ENCODE measurements at regions of chr4 and their contacts with region 1.

Region 1: DNA sequence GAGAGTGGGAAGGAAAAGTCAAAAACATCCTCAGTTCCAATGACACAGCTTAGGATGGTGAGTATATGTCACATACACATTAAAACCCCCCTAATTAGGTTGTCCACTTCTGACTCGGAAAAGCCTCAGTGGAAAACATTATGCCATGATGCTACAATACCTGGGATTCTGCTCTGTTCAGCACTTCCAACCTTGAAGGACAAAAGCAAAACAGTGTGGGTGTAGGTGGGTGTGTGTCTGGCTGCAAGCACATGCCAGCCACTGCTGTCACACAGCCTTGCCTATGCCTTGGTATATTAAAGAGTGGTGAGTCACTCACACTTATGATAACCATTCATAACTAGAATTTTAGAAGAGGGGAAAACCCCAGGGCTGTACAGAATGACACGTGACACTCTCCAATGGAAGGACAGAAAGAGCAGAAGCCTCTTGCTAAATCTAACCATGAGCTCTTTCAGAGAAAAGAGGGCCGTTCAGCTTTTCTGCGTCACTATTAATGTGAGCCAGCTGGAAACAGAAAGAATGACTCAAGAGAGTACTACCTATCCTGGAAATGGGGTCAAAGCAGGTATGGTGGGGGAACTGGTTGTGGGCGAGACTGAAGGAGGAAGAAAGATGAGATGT is 159.6 kb downstream of the TET2 start:
- DNase-seq: peak; percentile 84
- H3K4me3 Mint-ChIP-seq: no peak overlapping the region
- H3K27ac Mint-ChIP-seq: peak overlapping the region; percentile 87
- H3K4me1 Mint-ChIP-seq: peaks cover 24% of the 10 kb centered on the region
- H3K27me3 Mint-ChIP-seq: no peaks in the 10 kb centered on the region

Region 2: GRCh38 chr4:104930298-104930697 is 376.0 kb before region 1 on chr4:
- CTCF ChIA-PET with region 1: no interaction called
- intact Hi-C with region 1: loop called (anchors 5 kb)
- DNase-seq: no peak
- H3K4me3 Mint-ChIP-seq: no peak overlapping the region
- H3K27ac Mint-ChIP-seq: no peak overlapping the region
- H3K4me1 Mint-ChIP-seq: peaks cover 25% of the 10 kb centered on the region
- H3K27me3 Mint-ChIP-seq: no peaks in the 10 kb centered on the region

Region 3: GRCh38 chr4:105140684-105141490 is 165.4 kb before region 1 on chr4:
- CTCF ChIA-PET with region 1: interaction called, 4 read pairs
- intact Hi-C with region 1: loop called (anchors 1 kb)
- DNase-seq: peak; percentile 59
- H3K4me3 Mint-ChIP-seq: no peak overlapping the region
- H3K27ac Mint-ChIP-seq: no peak overlapping the region
- H3K4me1 Mint-ChIP-seq: peaks cover 28% of the 10 kb centered on the region
- H3K27me3 Mint-ChIP-seq: no peaks in the 10 kb centered on the region

Region 4: DNA sequence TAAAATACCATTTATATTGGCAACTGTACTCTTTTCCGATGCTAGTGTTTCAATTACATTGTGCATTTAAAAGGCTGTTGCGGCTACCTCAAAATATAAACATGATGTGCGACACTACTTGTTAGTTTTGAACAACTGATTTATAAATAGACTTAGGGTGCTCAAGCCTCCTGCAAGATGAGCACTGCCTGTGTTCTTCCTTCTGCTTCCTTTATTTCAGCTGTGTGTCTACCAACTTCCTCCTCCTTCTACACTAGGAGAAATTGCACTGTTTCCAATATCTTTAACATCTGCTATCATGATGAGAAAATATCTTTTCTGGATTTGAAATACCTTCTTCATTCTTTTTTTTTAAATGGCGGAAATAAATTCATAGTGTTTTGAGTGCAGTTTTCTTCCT is 135.6 kb before region 1 on chr4:
- CTCF ChIA-PET with region 1: no interaction called
- intact Hi-C with region 1: no loop called
- DNase-seq: no peak
- H3K4me3 Mint-ChIP-seq: no peak overlapping the region
- H3K27ac Mint-ChIP-seq: no peak overlapping the region
- H3K4me1 Mint-ChIP-seq: peaks cover 24% of the 10 kb centered on the region
- H3K27me3 Mint-ChIP-seq: no peaks in the 10 kb centered on the region

Region 5: DNA sequence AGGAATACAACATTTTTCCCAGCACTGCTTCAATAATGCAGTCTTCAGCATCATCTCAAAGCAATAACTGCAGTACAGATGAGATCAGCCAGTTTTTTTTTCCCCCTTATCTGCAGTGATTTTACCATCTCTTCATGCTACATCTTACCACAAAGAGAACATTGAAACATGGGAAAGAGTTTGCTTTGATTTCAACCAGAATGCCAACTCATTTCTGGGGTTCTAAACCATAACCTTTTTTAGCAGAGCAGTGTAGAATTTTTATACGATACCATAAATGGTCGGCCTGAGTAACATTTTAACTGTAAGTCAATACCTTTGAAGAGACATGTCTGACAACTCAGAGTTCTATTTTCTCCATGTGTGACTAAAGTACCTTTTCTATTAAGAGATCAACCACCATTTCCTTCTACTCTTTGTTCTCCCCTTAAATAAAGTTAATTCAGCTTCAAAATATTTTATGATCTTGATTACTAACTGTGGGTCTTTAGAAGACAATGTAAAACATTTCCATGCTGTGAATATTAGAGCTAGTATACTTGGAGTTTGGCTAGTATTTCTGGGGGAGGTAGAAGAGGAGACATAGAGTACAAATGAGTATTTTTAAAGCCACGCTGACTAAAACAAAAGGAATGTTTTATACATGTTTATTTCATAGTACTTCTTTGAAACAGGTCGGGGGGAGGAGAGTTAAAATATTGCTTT is 90.5 kb before region 1 on chr4:
- CTCF ChIA-PET with region 1: interaction called, 4 read pairs
- intact Hi-C with region 1: loop called (anchors 1 kb)
- DNase-seq: no peak
- H3K4me3 Mint-ChIP-seq: peak overlapping the region; percentile 2
- H3K27ac Mint-ChIP-seq: peak overlapping the region; percentile 85
- H3K4me1 Mint-ChIP-seq: peaks cover 46% of the 10 kb centered on the region
- H3K27me3 Mint-ChIP-seq: no peaks in the 10 kb centered on the region

Region 6: DNA sequence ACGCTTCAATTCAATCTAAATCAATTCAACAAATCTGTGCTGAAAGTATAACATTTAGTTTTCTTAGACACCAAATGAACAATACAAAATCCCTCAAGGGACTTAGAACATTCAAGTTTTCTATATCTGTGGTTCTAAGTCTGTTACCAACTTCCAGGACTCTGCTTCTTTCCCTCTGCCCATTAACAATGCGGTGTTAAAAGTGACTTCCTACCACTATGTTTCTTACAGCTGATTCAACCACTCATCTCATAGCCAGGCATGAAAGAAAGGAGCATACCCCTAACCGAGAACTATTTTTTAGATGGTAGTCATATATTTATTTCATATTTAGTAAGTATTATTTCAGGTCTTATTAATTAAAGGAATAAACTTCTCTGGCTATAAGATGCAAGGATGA is 128.7 kb after region 1 on chr4:
- CTCF ChIA-PET with region 1: no interaction called
- intact Hi-C with region 1: loop called (anchors 1 kb)
- DNase-seq: no peak
- H3K4me3 Mint-ChIP-seq: no peak overlapping the region
- H3K27ac Mint-ChIP-seq: no peak overlapping the region
- H3K4me1 Mint-ChIP-seq: peaks cover 14% of the 10 kb centered on the region
- H3K27me3 Mint-ChIP-seq: no peaks in the 10 kb centered on the region

Region 7: DNA sequence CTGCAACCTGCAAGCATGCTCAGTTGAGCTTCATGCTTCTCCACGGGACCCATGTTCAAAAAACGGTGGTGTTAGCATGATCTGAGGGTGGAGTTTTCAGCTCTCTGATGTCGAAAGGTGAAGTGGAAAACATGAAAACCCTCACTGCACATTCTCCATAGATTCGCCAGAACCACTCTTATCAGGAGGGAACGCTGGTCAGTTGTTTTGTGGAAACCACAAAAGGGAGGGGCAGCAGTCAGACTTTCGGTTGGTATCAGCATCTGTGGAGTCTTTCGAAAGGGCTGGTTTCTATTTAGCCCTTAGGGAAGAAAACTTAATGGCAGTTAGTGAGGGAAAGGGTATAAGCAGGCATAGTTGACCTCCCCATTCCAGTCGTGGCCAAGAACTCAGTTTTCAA is 155.0 kb after region 1 on chr4:
- CTCF ChIA-PET with region 1: no interaction called
- intact Hi-C with region 1: no loop called
- DNase-seq: no peak
- H3K4me3 Mint-ChIP-seq: no peak overlapping the region
- H3K27ac Mint-ChIP-seq: no peak overlapping the region
- H3K4me1 Mint-ChIP-seq: peaks cover 17% of the 10 kb centered on the region
- H3K27me3 Mint-ChIP-seq: no peaks in the 10 kb centered on the region

Region 8: GRCh38 chr4:105594099-105594993 is 288.1 kb after region 1 on chr4:
- CTCF ChIA-PET with region 1: no interaction called
- intact Hi-C with region 1: loop called (anchors 1 kb)
- DNase-seq: no peak
- H3K4me3 Mint-ChIP-seq: no peak overlapping the region
- H3K27ac Mint-ChIP-seq: no peak overlapping the region
- H3K4me1 Mint-ChIP-seq: peaks cover 2% of the 10 kb centered on the region
- H3K27me3 Mint-ChIP-seq: peaks cover 20% of the 10 kb centered on the region